Activated B cell treated with CpG ODN at 0.5 μM for 24 hours (primary cell): ENCODE measurements at regions of chr6 and their contacts with region 1.

Region 1: GRCh38 chr6:11496152-11497060 is 41.1 kb upstream of the TMEM170B start:
- DNase-seq: no peak
- ATAC-seq: peak; percentile 79
- H3K4me3 Mint-ChIP-seq: no peak overlapping the region
- H3K27ac Mint-ChIP-seq: peak overlapping the region; percentile 69
- H3K4me1 Mint-ChIP-seq: peaks cover 5% of the 10 kb centered on the region
- H3K27me3 Mint-ChIP-seq: no peaks in the 10 kb centered on the region
- CTCF ChIP-seq: peak; percentile 89

Region 2: GRCh38 chr6:10954590-10955010 is 541.8 kb before region 1 on chr6:
- CTCF ChIA-PET with region 1: interaction called, 12 read pairs
- POLR2A ChIA-PET with region 1: no interaction called
- intact Hi-C with region 1: loop called (anchors 1 kb)
- DNase-seq: peak; percentile 59
- ATAC-seq: peak; percentile 50
- H3K4me3 Mint-ChIP-seq: no peak overlapping the region
- H3K27ac Mint-ChIP-seq: no peak overlapping the region
- H3K4me1 Mint-ChIP-seq: peaks cover 3% of the 10 kb centered on the region
- H3K27me3 Mint-ChIP-seq: peaks cover 16% of the 10 kb centered on the region
- CTCF ChIP-seq: no peak

Region 3: DNA sequence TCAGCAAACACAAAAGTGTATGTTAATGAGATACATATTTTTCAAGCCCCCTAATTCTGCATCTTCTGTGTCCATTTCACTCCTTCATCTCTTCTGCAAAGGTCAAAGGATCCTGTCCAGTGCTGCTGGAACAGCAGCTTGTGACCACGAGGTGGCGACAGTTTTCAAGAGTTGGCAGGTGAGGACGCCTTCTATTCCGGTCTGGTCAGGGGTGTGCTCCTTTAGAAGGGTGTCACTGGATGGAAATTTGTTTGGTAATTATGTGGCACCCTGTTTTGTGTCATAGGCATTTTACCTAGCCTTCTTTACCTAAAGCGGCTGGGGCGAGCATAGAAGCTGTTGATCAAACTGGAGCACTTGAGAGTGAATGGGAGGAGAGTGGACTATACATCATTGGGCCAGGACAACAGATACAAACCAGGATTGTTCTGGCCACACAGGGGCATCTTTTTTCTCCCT is 352.0 kb before region 1 on chr6:
- CTCF ChIA-PET with region 1: interaction called, 102 read pairs
- POLR2A ChIA-PET with region 1: interaction called, 7 read pairs
- intact Hi-C with region 1: loop called (anchors 1 kb)
- DNase-seq: peak; percentile 52
- ATAC-seq: peak; percentile 89
- H3K4me3 Mint-ChIP-seq: no peak overlapping the region
- H3K27ac Mint-ChIP-seq: no peak overlapping the region
- H3K4me1 Mint-ChIP-seq: peaks cover 13% of the 10 kb centered on the region
- H3K27me3 Mint-ChIP-seq: no peaks in the 10 kb centered on the region
- CTCF ChIP-seq: peak; percentile 85

Region 4: DNA sequence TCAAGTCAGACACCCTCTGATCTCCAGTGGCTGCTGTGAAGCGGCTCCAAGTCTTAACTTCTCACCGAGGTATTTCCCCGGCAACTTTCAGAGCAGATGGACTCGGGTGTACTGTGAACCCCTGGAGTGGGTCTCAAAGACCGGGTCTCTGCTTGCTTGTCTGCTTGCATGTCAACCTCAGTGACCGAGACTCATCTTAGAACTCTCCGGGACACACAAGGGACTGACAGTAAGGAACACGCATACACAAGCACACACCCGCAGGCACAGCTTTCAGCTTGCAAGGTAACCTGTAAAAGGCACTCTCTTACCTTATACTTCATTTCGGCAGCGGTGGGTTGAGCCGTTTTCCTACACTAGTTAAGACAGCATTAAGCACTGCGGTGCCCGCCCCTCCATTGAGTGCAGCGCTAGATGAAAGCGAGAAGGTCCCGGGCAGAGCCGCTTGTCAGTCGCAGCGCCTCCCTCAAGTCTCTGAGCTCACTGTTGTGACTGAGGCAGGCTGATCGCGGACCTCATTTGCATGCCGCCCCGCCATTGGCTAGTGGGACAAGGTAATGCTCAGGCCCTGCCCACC is 264.1 kb before region 1 on chr6 and contains the start of gene NEDD9:
- CTCF ChIA-PET with region 1: interaction called, 4 read pairs
- POLR2A ChIA-PET with region 1: interaction called, 7 read pairs
- intact Hi-C with region 1: loop called (anchors 1 kb)
- DNase-seq: peak; percentile 79
- ATAC-seq: peak; percentile 99
- H3K4me3 Mint-ChIP-seq: peak within 1 kb of the TSS; percentile 95
- H3K27ac Mint-ChIP-seq: peak within 1 kb of the TSS; percentile 94
- H3K4me1 Mint-ChIP-seq: peaks cover 51% of the 10 kb centered on the region
- H3K27me3 Mint-ChIP-seq: no peaks in the 10 kb centered on the region
- CTCF ChIP-seq: no peak
- total RNA-seq, gene NEDD9: 57.4 and 61.9 TPM in 2 replicates

Region 5: GRCh38 chr6:11374036-11375010 is 122.1 kb before region 1 on chr6:
- CTCF ChIA-PET with region 1: interaction called, 27 read pairs
- POLR2A ChIA-PET with region 1: no interaction called
- intact Hi-C with region 1: loop called (anchors 1 kb)
- DNase-seq: no peak
- ATAC-seq: peak; percentile 93
- H3K4me3 Mint-ChIP-seq: peak overlapping the region; percentile 53
- H3K27ac Mint-ChIP-seq: peak overlapping the region; percentile 77
- H3K4me1 Mint-ChIP-seq: peaks cover 90% of the 10 kb centered on the region
- H3K27me3 Mint-ChIP-seq: no peaks in the 10 kb centered on the region
- CTCF ChIP-seq: no peak

Region 6: GRCh38 chr6:11460001-11460668 is 36.3 kb before region 1 on chr6:
- CTCF ChIA-PET with region 1: interaction called, 34 read pairs
- POLR2A ChIA-PET with region 1: interaction called, 40 read pairs
- intact Hi-C with region 1: loop called (anchors 1 kb)
- DNase-seq: peak; percentile 22
- ATAC-seq: peak; percentile 18
- H3K4me3 Mint-ChIP-seq: peak overlapping the region; percentile 80
- H3K27ac Mint-ChIP-seq: peak overlapping the region; percentile 96
- H3K4me1 Mint-ChIP-seq: peaks cover 78% of the 10 kb centered on the region
- H3K27me3 Mint-ChIP-seq: no peaks in the 10 kb centered on the region
- CTCF ChIP-seq: no peak

Region 7: DNA sequence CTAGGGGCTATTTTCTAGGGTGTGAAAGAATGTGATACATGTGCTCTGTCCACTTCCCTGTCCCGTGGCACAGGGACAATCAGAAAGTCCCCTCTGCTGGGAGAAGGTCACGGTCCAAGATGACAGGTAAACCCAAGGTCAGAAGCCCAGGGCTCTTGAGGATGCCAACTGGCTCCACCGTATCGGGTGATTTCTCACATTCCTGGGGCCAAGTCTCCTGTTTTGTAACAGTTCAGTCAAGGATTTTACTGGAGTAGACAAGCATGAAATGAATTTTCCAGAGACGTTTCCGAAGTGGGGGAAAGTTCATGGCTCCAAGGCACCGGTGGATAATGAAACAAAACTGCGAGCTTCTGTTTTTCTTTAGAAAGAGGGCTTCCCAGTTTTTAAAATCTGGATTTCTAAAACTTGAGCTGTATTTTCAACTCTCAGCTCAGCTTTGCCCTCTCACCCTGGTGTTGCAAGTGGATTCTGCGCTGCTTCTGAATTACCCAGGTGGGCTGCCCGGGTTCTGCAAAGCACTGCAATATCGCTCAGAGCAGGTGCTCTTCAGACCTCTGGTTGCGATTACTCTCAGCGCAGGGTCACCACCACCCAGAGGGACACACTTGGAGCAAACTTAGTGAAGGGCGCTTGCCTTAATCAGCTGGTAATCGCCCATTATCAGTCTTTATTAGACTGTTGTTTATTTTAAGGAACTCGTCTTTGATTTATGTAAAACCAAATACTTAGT is 23.2 kb before region 1 on chr6:
- CTCF ChIA-PET with region 1: no interaction called
- POLR2A ChIA-PET with region 1: no interaction called
- intact Hi-C with region 1: no loop called
- DNase-seq: no peak
- ATAC-seq: no peak
- H3K4me3 Mint-ChIP-seq: no peak overlapping the region
- H3K27ac Mint-ChIP-seq: no peak overlapping the region
- H3K4me1 Mint-ChIP-seq: peaks cover 17% of the 10 kb centered on the region
- H3K27me3 Mint-ChIP-seq: no peaks in the 10 kb centered on the region
- CTCF ChIP-seq: no peak

Region 8: GRCh38 chr6:11575408-11576033 is 79.1 kb after region 1 on chr6:
- CTCF ChIA-PET with region 1: interaction called, 30 read pairs
- POLR2A ChIA-PET with region 1: no interaction called
- intact Hi-C with region 1: loop called (anchors 1 kb)
- DNase-seq: no peak
- ATAC-seq: peak; percentile 100
- H3K4me3 Mint-ChIP-seq: no peak overlapping the region
- H3K27ac Mint-ChIP-seq: no peak overlapping the region
- H3K4me1 Mint-ChIP-seq: peaks cover 2% of the 10 kb centered on the region
- H3K27me3 Mint-ChIP-seq: no peaks in the 10 kb centered on the region
- CTCF ChIP-seq: peak; percentile 73